Sigmoid colon (tissue), 7 donors: ENCODE measurements at regions of chr18 and their contacts with region 1.

Region 1: DNA sequence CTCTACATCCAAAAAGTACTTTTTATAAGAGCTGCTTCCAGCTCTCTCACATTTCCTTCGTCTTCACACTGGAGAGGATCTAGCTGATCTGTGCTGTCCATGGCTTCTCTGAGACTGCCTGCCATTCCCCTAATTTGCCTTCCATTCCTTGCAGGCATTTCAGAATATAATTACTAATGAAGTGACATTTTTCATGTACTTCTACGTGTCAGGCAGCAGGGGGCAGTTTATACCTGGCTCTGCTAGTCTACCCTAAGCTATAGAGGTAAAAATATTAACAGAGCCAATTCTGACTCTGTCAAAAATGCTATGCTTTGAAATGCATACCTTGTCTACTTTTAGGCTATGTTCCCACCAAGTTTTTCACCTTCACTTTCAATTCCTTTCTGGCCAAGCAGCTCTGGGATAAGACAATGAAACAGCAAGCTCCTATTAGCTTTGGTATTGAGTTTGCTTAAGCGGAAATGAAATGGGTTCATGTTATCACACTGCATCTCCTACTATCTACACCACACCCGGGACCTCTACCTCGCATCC is 81.9 kb downstream of the MEP1B start:
- DNase-seq: no peak
- H3K4me3 ChIP-seq: no peak overlapping the region
- H3K27ac ChIP-seq: no peak overlapping the region
- H3K4me1 ChIP-seq: peaks cover 0 to 7% (median 0%) of the 10 kb centered on the region in 4 donors
- H3K27me3 ChIP-seq: no peaks in the 10 kb centered on the region
- CTCF ChIP-seq: peak; percentile 57 to 70 (median 60)
- EP300 ChIP-seq: no peak
- POLR2A ChIP-seq: no peak

Region 2: GRCh38 chr18:31750273-31750672 is 521.5 kb before region 1 on chr18:
- intact Hi-C with region 1: no loop called
- DNase-seq: no peak
- H3K4me3 ChIP-seq: no peak overlapping the region
- H3K27ac ChIP-seq: no peak overlapping the region
- H3K4me1 ChIP-seq: no peaks in the 10 kb centered on the region
- H3K27me3 ChIP-seq: no peaks in the 10 kb centered on the region
- CTCF ChIP-seq: no peak
- EP300 ChIP-seq: no peak
- POLR2A ChIP-seq: no peak

Region 3: DNA sequence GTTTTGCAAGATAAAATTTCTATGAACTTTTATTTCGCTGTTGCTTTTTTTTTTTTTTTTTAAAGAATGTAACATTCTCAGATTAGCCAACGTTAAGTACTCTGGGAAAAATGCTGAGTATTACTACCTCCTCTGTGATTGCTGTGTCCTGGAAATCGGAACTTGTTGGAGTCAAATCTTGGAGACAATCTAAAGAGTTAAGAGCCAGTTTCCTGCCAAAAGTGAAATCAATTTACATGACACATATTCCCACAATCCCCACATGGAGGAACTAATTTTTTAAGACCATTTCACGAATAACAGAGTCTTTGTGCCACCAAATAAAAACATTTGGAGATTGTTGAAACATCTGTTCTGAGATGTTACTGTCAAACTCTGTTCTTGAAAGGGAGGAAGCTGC is 45.9 kb after region 1 on chr18:
- intact Hi-C with region 1: no loop called
- DNase-seq: no peak
- H3K4me3 ChIP-seq: no peak overlapping the region
- H3K27ac ChIP-seq: peak overlapping the region in 3 of 4 donors; percentile 9 to 66 (median 33)
- H3K4me1 ChIP-seq: peaks cover 0 to 13% (median 8%) of the 10 kb centered on the region in 4 donors
- H3K27me3 ChIP-seq: no peaks in the 10 kb centered on the region
- CTCF ChIP-seq: no peak
- EP300 ChIP-seq: no peak
- POLR2A ChIP-seq: no peak

Region 4: GRCh38 chr18:32552421-32553030 is 280.8 kb after region 1 on chr18:
- intact Hi-C with region 1: loop called (anchors 2 kb)
- DNase-seq: peak; percentile 68
- H3K4me3 ChIP-seq: no peak overlapping the region
- H3K27ac ChIP-seq: no peak overlapping the region
- H3K4me1 ChIP-seq: no peaks in the 10 kb centered on the region
- H3K27me3 ChIP-seq: no peaks in the 10 kb centered on the region
- CTCF ChIP-seq: peak; percentile 56 to 75 (median 66)
- EP300 ChIP-seq: no peak
- POLR2A ChIP-seq: no peak